ENCODE measurements at regions of chr22 and their contacts with region 1.

Region 1: GRCh38 chr22:23774743-23775566 is 2.3 kb downstream of the MMP11 start:
- DNase-seq: no peak
- ATAC-seq: no peak
- H3K4me3 ChIP-seq: no peak overlapping the region
- H3K27ac ChIP-seq: no peak overlapping the region
- H3K4me1 ChIP-seq: peaks cover 19% of the 10 kb centered on the region
- H3K27me3 ChIP-seq: no peaks in the 10 kb centered on the region
- CTCF ChIP-seq: no peak
- POLR2A ChIP-seq: no peak

Region 2: DNA sequence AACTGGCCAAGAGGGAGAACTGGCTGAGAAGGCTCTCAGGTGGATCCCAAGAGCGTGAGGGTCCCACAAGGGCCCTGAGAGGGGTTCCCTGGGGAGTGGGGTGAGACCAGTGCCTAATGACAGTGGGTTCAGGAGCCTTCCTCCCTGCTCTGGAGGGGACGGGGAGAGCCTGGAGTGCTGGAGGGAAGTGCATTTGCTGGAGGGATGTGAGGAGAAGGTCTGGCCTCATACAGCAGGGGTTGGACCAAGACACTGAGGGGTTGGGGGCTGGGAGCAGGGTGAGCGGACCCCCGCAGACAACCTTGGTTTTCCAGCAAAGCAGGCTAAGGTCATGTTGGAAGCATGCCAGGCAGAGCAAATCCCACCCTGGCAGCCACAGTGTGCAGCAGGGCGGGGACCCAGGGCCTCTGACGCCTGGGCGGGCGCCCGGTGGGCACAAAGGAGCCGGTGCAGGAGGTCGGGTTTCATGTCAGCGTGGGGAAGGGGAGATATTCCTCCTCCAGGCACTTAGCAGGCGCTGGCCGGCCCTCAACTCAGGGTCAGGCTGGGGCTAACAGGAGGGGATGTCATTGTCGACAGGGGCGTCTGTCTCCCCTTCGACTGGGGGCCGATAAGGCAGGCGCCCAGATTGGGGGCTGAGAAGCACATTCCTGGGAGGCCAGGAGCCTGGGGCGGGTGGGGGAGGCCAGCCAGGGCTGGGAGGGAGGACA is 66.9 kb after region 1 on chr22:
- intact Hi-C with region 1: loop called (anchors 5 kb)
- DNase-seq: no peak
- ATAC-seq: no peak
- H3K4me3 ChIP-seq: no peak overlapping the region
- H3K27ac ChIP-seq: no peak overlapping the region
- H3K4me1 ChIP-seq: peaks cover 27% of the 10 kb centered on the region
- H3K27me3 ChIP-seq: no peaks in the 10 kb centered on the region
- CTCF ChIP-seq: no peak
- POLR2A ChIP-seq: no peak

Region 3: GRCh38 chr22:25027959-25028840 is 1253.2 kb after region 1 on chr22:
- intact Hi-C with region 1: no loop called
- DNase-seq: peak in 1 of 4 donors; percentile 44
- ATAC-seq: no peak
- H3K4me3 ChIP-seq: no peak overlapping the region
- H3K27ac ChIP-seq: no peak overlapping the region
- H3K4me1 ChIP-seq: peaks cover 7% of the 10 kb centered on the region
- H3K27me3 ChIP-seq: no peaks in the 10 kb centered on the region
- CTCF ChIP-seq: peak in 4 of 7 experiments; percentile 16 to 33 (median 20)
- POLR2A ChIP-seq: no peak